ENCODE measurements at regions of chr19 and their contacts with region 1.

Region 1: GRCh38 chr19:4115050-4115817 is 8.7 kb downstream of the MAP2K2 start:
- DNase-seq: no peak
- ATAC-seq: no peak; the same call in 1 of the 2 replicates
- H3K4me3 ChIP-seq: no peak overlapping the region
- H3K27ac ChIP-seq: no peak overlapping the region
- H3K4me1 ChIP-seq: no peaks in the 10 kb centered on the region
- H3K27me3 ChIP-seq: no peaks in the 10 kb centered on the region
- CTCF ChIP-seq: no peak

Region 2: GRCh38 chr19:4023600-4024398 is 91.4 kb before region 1 on chr19:
- CTCF ChIA-PET with region 1: no interaction called
- POLR2A ChIA-PET with region 1: no interaction called
- in situ Hi-C with region 1: no loop called
- intact Hi-C with region 1: no loop called
- DNase-seq: no peak
- ATAC-seq: no peak
- H3K4me3 ChIP-seq: no peak overlapping the region
- H3K27ac ChIP-seq: no peak overlapping the region
- H3K4me1 ChIP-seq: no peaks in the 10 kb centered on the region
- H3K27me3 ChIP-seq: no peaks in the 10 kb centered on the region
- CTCF ChIP-seq: no peak

Region 3: DNA sequence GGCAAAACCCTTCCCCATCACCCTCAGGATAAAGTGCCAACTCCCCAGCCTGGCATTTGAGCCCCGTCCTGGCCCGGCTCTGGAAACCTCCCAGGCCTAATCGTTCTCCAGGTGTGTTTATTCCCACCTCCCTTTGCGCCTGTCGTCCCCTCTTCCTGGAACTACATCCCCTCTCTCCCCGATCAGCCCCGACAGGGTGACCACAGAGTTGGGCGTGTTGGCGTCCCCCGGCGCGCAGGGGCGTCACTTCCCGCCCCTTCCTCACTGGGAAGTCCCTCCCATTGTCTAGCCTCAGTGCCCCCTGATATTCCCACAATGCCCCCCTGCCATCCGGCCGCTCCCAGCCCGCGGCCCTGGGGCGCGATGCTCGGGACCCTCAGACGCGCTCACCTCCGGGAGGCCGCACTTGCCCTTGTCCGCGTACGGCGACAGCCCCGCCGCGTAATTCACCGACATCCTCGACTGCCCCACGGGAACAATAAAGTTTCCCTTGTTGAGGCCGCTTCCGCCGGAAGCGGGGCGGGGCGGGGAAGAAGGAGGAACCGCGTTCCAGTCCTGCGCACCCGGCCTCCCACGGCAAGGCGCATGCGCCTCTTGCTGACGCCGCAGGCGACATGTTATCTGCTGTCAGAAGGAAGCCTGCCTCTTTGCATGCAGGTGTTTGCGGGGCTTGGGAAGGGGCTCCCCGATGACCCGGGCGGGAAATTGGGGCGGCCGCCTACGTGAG is 67.0 kb after region 1 on chr19 and contains the starts of genes ANKRD24 and SIRT6:
- CTCF ChIA-PET with region 1: no interaction called
- POLR2A ChIA-PET with region 1: interaction called, 10 read pairs
- in situ Hi-C with region 1: no loop called
- intact Hi-C with region 1: no loop called
- DNase-seq: peak; percentile 51
- ATAC-seq: peak; percentile 88
- H3K4me3 ChIP-seq: peak within 1 kb of the TSS; percentile 70 to 84
- H3K27ac ChIP-seq: peak within 1 kb of the TSS; percentile 83
- H3K4me1 ChIP-seq: no peaks in the 10 kb centered on the region; the same call in none of the 2 replicates
- H3K27me3 ChIP-seq: no peaks in the 10 kb centered on the region
- CTCF ChIP-seq: no peak
- total RNA-seq, gene ANKRD24: 0.26 TPM
- total RNA-seq, gene SIRT6: 19.8 TPM

Region 4: DNA sequence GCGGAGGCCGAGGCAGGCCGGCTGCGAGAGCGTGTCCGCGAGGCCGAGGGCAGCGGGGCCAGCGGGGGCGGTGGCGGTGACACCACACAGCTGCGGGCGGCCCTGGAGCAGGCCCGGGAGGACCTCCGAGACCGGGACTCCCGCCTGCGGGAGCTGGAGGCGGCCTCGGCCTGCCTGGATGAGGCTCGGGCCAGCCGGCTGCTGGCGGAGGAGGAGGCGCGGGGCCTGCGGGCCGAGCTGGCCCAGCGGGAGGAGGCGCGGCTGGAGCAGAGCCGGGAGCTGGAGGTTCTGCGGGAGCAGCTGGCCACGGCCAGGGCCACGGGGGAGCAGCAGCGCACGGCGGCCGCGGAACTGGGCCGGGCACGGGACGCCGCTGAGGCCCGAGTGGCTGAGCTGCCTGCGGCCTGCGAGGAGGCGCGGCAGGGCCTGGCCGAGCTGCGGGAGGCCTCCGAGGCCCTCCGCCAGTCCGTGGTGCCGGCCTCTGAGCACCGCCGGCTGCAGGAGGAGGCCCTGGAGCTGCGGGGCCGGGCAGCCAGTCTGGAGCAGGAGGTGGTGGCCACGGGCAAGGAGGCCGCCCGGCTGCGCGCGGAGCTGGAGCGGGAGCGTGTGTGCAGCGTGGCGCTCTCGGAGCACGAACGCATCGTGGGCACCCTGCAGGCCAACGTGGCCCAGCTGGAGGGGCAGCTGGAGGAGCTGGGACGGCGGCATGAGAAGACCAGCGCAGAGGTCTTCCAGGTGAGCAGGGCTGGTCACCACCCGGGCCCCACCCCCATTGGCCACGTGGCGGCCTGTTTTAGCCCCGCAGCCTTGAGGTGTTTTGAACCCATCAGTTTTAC is 102.4 kb after region 1 on chr19:
- CTCF ChIA-PET with region 1: no interaction called
- POLR2A ChIA-PET with region 1: no interaction called
- in situ Hi-C with region 1: no loop called
- intact Hi-C with region 1: no loop called
- DNase-seq: no peak
- ATAC-seq: no peak
- H3K4me3 ChIP-seq: no peak overlapping the region
- H3K27ac ChIP-seq: no peak overlapping the region
- H3K4me1 ChIP-seq: no peaks in the 10 kb centered on the region
- H3K27me3 ChIP-seq: no peaks in the 10 kb centered on the region
- CTCF ChIP-seq: no peak

Region 5: GRCh38 chr19:4304530-4305252 is 189.5 kb after region 1 on chr19 and contains the start of gene FSD1:
- CTCF ChIA-PET with region 1: no interaction called
- POLR2A ChIA-PET with region 1: interaction called, 12 read pairs
- in situ Hi-C with region 1: no loop called
- intact Hi-C with region 1: no loop called
- DNase-seq: no peak
- ATAC-seq: peak; percentile 94
- H3K4me3 ChIP-seq: peak within 1 kb of the TSS; percentile 21 to 37; a peak in 3 of 4 replicates
- H3K27ac ChIP-seq: no peak within 1 kb of the TSS
- H3K4me1 ChIP-seq: peaks cover 5% of the 10 kb centered on the region
- H3K27me3 ChIP-seq: no peaks in the 10 kb centered on the region
- CTCF ChIP-seq: no peak
- total RNA-seq, gene FSD1: 12.1 TPM

Measured in Panc1 (cell line).